B cell (primary cell): ENCODE measurements at regions of chr11 and their contacts with region 1.

Region 1: GRCh38 chr11:9757809-9758636 is 94.1 kb downstream of the SWAP70 start:
- DNase-seq: peak; percentile 96
- ATAC-seq: peak; percentile 59
- H3K4me3 ChIP-seq: peak overlapping the region; percentile 76 to 94 (median 79)
- H3K4me3 Mint-ChIP-seq: peak overlapping the region; percentile 91
- H3K27ac ChIP-seq: peak overlapping the region; percentile 88 to 89
- H3K27ac Mint-ChIP-seq: peak overlapping the region; percentile 97
- H3K4me1 ChIP-seq: peaks cover 55 to 60% of the 10 kb centered on the region in 2 donors
- H3K4me1 Mint-ChIP-seq: peaks cover 79% of the 10 kb centered on the region
- H3K27me3 ChIP-seq: no peaks in the 10 kb centered on the region
- H3K27me3 Mint-ChIP-seq: no peaks in the 10 kb centered on the region
- CTCF ChIP-seq: peak; percentile 85

Region 2: GRCh38 chr11:9534791-9535781 is 222.9 kb before region 1 on chr11:
- CTCF ChIA-PET with region 1: interaction called, 129 read pairs
- POLR2A ChIA-PET with region 1: no interaction called
- intact Hi-C with region 1: no loop called
- DNase-seq: peak; percentile 83
- ATAC-seq: peak; percentile 53
- H3K4me3 ChIP-seq: no peak overlapping the region
- H3K4me3 Mint-ChIP-seq: no peak overlapping the region
- H3K27ac ChIP-seq: no peak overlapping the region
- H3K27ac Mint-ChIP-seq: no peak overlapping the region
- H3K4me1 ChIP-seq: peaks cover 0 to 10% of the 10 kb centered on the region in 2 donors
- H3K4me1 Mint-ChIP-seq: peaks cover 2% of the 10 kb centered on the region
- H3K27me3 ChIP-seq: no peaks in the 10 kb centered on the region
- H3K27me3 Mint-ChIP-seq: no peaks in the 10 kb centered on the region
- CTCF ChIP-seq: peak; percentile 93

Region 3: GRCh38 chr11:9861860-9862725 is 104.1 kb after region 1 on chr11:
- CTCF ChIA-PET with region 1: interaction called, 11 read pairs
- POLR2A ChIA-PET with region 1: no interaction called
- intact Hi-C with region 1: loop called (anchors 1 kb)
- DNase-seq: peak; percentile 67
- ATAC-seq: peak; percentile 82
- H3K4me3 ChIP-seq: no peak overlapping the region
- H3K4me3 Mint-ChIP-seq: no peak overlapping the region
- H3K27ac ChIP-seq: no peak overlapping the region
- H3K27ac Mint-ChIP-seq: no peak overlapping the region
- H3K4me1 ChIP-seq: peaks cover 14 to 18% of the 10 kb centered on the region in 2 donors
- H3K4me1 Mint-ChIP-seq: peaks cover 28% of the 10 kb centered on the region
- H3K27me3 ChIP-seq: no peaks in the 10 kb centered on the region
- H3K27me3 Mint-ChIP-seq: no peaks in the 10 kb centered on the region
- CTCF ChIP-seq: peak; percentile 84

Region 4: DNA sequence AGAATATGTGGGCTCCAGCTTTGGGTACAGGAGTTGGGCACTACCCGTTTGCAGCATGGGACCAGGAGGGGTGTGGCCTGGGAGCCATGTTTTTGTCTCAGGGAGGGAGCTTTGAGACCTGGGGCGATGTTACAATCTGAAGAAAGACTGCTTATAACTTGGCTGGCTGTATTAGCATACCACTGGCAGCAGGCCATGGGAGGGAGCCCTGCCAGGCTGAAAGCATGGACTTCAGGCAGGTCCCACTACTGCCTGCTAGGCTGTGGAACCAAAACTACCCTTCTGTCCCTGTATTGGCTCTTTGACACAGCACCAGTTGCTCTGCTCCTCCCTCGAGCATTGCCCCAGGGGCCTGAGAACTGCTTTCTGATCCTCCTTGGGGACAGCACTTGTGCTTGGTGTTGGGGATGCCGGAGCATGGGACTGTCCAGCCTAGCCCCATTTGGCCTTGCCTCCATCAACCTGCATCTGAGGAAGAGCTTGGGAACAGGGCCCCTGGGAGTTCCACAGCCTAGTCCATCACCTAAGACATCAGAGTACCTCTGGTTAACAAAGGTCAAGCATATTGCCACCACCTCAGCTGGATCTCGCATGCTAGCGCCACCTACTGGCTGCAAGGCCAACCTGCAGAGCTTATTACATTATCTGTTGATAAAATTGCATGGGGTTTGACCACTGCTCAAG is 318.6 kb after region 1 on chr11:
- CTCF ChIA-PET with region 1: interaction called, 16 read pairs
- POLR2A ChIA-PET with region 1: no interaction called
- intact Hi-C with region 1: loop called (anchors 2 kb)
- DNase-seq: peak; percentile 62
- ATAC-seq: peak; percentile 49
- H3K4me3 ChIP-seq: no peak overlapping the region
- H3K4me3 Mint-ChIP-seq: no peak overlapping the region
- H3K27ac ChIP-seq: no peak overlapping the region
- H3K27ac Mint-ChIP-seq: no peak overlapping the region
- H3K4me1 ChIP-seq: no peaks in the 10 kb centered on the region
- H3K4me1 Mint-ChIP-seq: no peaks in the 10 kb centered on the region
- H3K27me3 ChIP-seq: no peaks in the 10 kb centered on the region
- H3K27me3 Mint-ChIP-seq: no peaks in the 10 kb centered on the region
- CTCF ChIP-seq: peak; percentile 81

Region 5: GRCh38 chr11:10322830-10323792 is 565.1 kb after region 1 on chr11:
- CTCF ChIA-PET with region 1: interaction called, 18 read pairs
- POLR2A ChIA-PET with region 1: interaction called, 3 read pairs
- intact Hi-C with region 1: loop called (anchors 1 kb)
- DNase-seq: peak; percentile 70
- ATAC-seq: peak; percentile 44
- H3K4me3 ChIP-seq: no peak overlapping the region
- H3K4me3 Mint-ChIP-seq: no peak overlapping the region
- H3K27ac ChIP-seq: no peak overlapping the region
- H3K27ac Mint-ChIP-seq: peak overlapping the region; percentile 67
- H3K4me1 ChIP-seq: peaks cover 7 to 14% of the 10 kb centered on the region in 2 donors
- H3K4me1 Mint-ChIP-seq: peaks cover 17% of the 10 kb centered on the region
- H3K27me3 ChIP-seq: peaks cover 0 to 6% (median 0%) of the 10 kb centered on the region in 4 experiments
- H3K27me3 Mint-ChIP-seq: peaks cover 16% of the 10 kb centered on the region
- CTCF ChIP-seq: peak; percentile 76